ENCODE measurements at regions of chr1 and their contacts with region 1.

Region 1: GRCh38 chr1:201481761-201482493 is 12.9 kb upstream of the PHLDA3 start:
- DNase-seq: peak; percentile 94
- H3K4me3 Mint-ChIP-seq: peak overlapping the region; percentile 63
- H3K27ac Mint-ChIP-seq: peak overlapping the region; percentile 13
- H3K4me1 Mint-ChIP-seq: peaks cover 25% of the 10 kb centered on the region
- H3K27me3 Mint-ChIP-seq: no peaks in the 10 kb centered on the region
- CTCF ChIP-seq: peak; percentile 94

Region 2: DNA sequence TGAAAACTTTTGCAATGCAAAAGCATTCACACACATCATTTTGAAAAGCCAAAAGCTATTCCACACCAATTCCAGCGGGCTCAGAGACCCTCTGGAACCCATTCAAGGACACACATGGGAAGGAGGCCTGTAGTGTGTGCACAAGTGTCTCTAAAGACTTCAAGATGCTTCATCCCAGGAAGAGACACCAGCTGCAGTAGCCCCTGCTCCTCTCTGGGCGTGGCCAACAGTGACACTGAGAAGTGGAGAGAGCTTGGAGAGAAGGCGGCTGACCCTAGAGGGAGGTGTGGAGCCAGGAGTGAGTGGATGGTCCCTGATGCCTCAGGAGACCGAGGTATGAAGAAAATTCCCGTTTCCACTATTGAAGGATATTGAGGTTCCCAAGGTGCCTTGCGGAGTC is 45.5 kb before region 1 on chr1:
- CTCF ChIA-PET with region 1: interaction called, 72 read pairs
- intact Hi-C with region 1: loop called (anchors 2 kb)
- DNase-seq: peak; percentile 48
- H3K4me3 Mint-ChIP-seq: no peak overlapping the region
- H3K27ac Mint-ChIP-seq: no peak overlapping the region
- H3K4me1 Mint-ChIP-seq: peaks cover 26% of the 10 kb centered on the region
- H3K27me3 Mint-ChIP-seq: peaks cover 3% of the 10 kb centered on the region
- CTCF ChIP-seq: no peak

Region 3: DNA sequence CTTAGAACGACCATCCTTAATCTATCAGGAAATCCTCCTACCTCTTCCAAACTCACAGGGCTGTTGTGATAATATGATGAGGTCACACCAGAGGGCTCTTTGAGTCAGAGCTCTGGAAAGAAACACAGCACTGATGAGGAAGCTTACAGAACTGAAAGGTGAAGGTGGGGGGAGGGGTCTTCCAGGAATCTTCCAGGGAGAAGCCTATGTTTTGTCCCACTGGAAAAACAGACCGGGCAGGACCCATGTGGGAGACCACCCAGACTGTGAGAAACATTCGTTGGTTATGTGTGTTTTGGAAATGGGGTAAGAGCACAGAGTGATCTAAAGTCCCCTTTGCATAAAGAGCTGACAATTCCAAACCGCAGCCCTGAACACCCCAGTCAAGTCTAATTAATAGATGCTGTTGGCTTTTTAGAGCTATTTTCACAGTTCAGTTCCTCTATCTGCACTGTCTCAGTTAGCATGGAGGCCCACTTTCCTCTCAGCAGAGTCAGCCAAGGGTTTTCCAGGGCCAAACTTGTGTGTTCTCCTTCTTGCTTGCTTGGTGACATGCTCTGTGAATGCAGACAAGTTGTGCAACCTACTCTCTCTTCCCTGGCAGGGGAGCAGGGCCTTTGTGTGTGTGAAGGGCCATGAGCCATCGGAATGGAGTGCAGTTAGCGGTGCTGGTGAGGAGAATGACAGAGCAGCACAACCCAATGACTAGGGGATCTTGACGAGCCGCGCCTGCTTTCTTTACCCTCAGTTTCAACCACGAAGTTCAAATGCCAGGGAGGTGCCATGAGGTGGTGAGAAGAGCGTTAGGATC is 25.2 kb before region 1 on chr1:
- CTCF ChIA-PET with region 1: interaction called, 149 read pairs
- intact Hi-C with region 1: no loop called
- DNase-seq: no peak
- H3K4me3 Mint-ChIP-seq: peak overlapping the region; percentile 13
- H3K27ac Mint-ChIP-seq: peak overlapping the region; percentile 50
- H3K4me1 Mint-ChIP-seq: peaks cover 46% of the 10 kb centered on the region
- H3K27me3 Mint-ChIP-seq: no peaks in the 10 kb centered on the region
- CTCF ChIP-seq: no peak

Region 4: GRCh38 chr1:201468844-201469511 is 12.9 kb before region 1 on chr1 and contains the start of gene PHLDA3:
- CTCF ChIA-PET with region 1: interaction called, 14 read pairs
- intact Hi-C with region 1: no loop called
- DNase-seq: peak; percentile 82
- H3K4me3 Mint-ChIP-seq: peak within 1 kb of the TSS; percentile 85
- H3K27ac Mint-ChIP-seq: peak within 1 kb of the TSS; percentile 61
- H3K4me1 Mint-ChIP-seq: peaks cover 37% of the 10 kb centered on the region
- H3K27me3 Mint-ChIP-seq: no peaks in the 10 kb centered on the region
- CTCF ChIP-seq: peak; percentile 21
- total RNA-seq, gene PHLDA3: 31.1 and 36.7 TPM in 2 replicates

Region 5: GRCh38 chr1:201511941-201512539 is 30.1 kb after region 1 on chr1:
- CTCF ChIA-PET with region 1: interaction called, 172 read pairs
- intact Hi-C with region 1: loop called (anchors 1 kb)
- DNase-seq: no peak
- H3K4me3 Mint-ChIP-seq: no peak overlapping the region
- H3K27ac Mint-ChIP-seq: no peak overlapping the region
- H3K4me1 Mint-ChIP-seq: peaks cover 46% of the 10 kb centered on the region
- H3K27me3 Mint-ChIP-seq: no peaks in the 10 kb centered on the region
- CTCF ChIP-seq: no peak

Region 6: DNA sequence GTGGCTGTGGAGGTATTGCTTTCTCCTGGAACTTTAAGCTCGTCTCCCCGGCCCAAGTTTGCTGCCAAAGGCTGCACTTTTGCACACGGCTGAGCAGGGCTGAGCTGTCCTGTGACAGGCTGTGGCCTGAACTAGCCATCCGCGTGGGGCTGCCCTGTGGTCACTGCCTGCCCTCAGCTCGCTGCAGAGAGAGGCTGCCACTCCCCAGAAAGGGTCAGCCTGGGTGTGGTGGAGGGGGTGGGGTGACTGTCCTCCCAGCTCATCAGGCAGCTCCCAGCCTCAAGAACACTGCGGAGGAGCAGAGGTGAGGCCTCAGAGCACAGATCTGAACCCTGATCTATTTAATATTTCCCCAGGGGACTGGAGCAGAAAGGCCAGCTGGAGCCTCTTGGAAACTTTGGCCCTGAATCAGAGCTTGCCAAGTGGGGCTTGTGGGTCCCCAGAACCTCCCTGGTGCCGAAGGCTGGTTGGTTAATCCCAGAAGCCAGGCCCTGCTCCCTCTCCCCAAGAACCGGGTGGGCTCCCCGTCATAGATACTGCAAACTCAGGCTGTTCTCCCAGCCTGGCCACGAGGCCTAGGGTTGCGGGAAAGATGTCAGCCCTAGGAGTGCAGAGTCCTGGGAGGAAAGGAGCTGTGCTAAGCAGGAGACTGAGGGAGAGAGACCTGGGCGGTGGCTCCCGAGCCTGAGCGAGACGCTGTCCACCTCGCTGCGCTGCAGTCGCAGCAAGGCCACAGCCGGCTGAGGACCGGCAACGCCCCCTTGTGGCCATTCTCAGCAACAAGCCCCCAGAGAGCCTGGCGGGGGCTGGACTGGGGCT is 221.9 kb after region 1 on chr1:
- CTCF ChIA-PET with region 1: no interaction called
- intact Hi-C with region 1: loop called (anchors 1 kb)
- DNase-seq: peak; percentile 93
- H3K4me3 Mint-ChIP-seq: no peak overlapping the region
- H3K27ac Mint-ChIP-seq: no peak overlapping the region
- H3K4me1 Mint-ChIP-seq: no peaks in the 10 kb centered on the region
- H3K27me3 Mint-ChIP-seq: no peaks in the 10 kb centered on the region
- CTCF ChIP-seq: peak; percentile 98